Thyroid gland (tissue), 4 donors: ENCODE measurements at regions of chr2 and their contacts with region 1.

Region 1: GRCh38 chr2:15636972-15637785 is 45.5 kb downstream of the DDX1 start:
- DNase-seq: peak; percentile 82 to 84
- H3K4me3 ChIP-seq: no peak overlapping the region
- H3K27ac ChIP-seq: peak overlapping the region; percentile 42 to 65 (median 43)
- H3K4me1 ChIP-seq: peaks cover 18 to 38% of the 10 kb centered on the region in 2 donors
- H3K27me3 ChIP-seq: no peaks in the 10 kb centered on the region
- CTCF ChIP-seq: peak; percentile 64 to 100 (median 94)
- POLR2A ChIP-seq: no peak

Region 2: DNA sequence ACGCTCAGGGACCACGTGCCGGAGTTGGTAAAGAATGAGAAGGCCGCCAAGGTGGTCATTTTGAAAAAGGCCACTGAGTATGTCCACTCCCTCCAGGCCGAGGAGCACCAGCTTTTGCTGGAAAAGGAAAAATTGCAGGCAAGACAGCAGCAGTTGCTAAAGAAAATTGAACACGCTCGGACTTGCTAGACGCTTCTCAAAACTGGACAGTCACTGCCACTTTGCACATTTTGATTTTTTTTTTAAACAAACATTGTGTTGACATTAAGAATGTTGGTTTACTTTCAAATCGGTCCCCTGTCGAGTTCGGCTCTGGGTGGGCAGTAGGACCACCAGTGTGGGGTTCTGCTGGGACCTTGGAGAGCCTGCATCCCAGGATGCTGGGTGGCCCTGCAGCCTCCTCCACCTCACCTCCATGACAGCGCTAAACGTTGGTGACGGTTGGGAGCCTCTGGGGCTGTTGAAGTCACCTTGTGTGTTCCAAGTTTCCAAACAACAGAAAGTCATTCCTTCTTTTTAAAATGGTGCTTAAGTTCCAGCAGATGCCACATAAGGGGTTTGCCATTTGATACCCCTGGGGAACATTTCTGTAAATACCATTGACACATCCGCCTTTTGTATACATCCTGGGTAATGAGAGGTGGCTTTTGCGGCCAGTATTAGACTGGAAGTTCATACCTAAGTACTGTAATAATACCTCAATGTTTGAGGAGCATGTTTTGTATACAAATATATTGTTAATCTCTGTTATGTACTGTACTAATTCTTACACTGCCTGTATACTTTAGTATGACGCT is 308.9 kb after region 1 on chr2:
- intact Hi-C with region 1: no loop called
- DNase-seq: no peak
- H3K4me3 ChIP-seq: no peak overlapping the region
- H3K27ac ChIP-seq: no peak overlapping the region
- H3K4me1 ChIP-seq: peaks cover 12 to 22% of the 10 kb centered on the region in 2 donors
- H3K27me3 ChIP-seq: no peaks in the 10 kb centered on the region
- CTCF ChIP-seq: no peak
- POLR2A ChIP-seq: no peak

Region 3: DNA sequence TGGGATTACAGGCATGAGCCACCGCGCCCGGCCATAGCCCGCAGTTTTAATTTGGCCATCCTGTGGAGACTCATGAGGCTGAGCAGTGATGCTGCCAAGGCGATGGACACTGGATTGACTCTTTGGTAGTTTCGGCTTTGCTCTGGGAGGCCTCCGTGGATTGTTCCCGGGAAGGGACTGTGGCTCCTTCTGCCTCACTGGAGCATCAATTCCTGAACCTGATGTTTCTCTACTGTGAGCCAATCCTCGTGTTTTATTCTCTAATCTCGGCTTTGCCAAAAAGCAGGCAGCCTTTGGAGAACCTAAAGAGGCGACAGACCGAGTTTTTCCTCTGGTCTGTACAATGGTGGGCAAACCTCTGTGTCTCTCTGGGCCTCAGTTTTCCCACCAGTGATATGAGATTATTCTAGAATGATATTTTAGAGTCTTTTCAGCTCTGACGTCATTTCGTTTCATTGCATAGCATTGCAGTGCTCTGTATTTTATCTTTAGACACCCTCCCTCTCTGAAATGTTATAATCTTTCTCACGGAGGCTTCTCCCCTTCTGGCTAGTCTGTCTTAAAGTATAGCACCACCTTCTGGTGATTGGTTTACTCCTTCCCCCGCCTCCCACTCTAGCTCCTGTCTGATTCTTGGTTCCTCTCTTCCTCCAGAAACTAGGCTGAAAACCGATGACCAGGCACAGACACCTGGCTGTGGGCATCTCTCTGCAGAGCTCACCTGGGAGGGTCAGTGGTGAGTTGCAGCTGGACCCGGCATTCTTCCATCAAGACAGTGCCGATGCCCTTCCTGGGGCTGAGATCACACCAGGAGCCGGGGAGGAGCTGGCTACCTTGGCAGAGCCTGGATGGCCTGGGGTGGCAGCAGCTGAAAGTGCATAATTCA is 644.5 kb after region 1 on chr2:
- intact Hi-C with region 1: loop called (anchors 5 kb)
- DNase-seq: peak; percentile 48 to 50
- H3K4me3 ChIP-seq: no peak overlapping the region
- H3K27ac ChIP-seq: no peak overlapping the region
- H3K4me1 ChIP-seq: no peaks in the 10 kb centered on the region
- H3K27me3 ChIP-seq: no peaks in the 10 kb centered on the region
- CTCF ChIP-seq: peak in 5 of 6 experiments; percentile 31 to 63 (median 61)
- POLR2A ChIP-seq: no peak

Region 4: DNA sequence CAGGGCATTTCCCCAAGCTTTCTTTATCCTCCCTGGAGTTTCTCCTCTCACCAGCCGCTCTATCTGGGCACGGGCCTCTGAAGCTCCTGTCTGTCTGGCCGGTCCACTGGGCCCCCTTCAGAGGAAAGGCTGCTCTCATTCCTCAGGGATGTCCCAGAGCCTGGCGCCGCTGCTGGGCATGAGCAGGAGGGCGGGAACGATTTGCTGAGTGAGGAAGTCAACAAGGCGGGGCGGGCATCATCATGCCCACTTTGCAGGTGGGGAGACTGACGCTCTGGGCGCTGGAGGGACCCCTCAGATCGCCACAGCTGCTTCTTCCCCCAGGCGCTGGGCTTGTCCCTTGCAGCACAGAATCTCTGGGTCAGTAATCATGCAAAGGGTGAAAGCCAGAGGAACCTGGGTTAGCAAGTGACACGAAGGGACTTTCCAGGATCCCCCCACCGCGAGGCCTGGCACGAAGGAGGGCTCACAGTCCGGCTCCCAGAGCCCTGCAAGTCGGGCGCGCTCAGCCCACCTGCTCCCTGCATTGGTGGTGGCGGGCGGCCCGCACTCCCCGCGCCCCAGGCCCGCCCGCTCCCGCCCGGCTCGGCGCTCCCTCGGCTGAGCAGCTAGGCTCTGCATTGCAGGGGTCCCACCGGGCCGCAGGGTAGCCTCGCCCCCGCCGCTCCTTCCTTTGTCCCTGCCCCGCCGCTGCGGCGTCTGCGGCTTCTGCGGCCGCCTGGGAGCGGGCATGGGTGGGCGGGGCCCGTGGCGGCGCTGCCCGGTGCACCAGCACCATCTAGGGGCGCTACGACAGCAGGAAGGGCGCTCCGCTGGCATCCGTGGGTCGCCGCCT is 870.7 kb after region 1 on chr2:
- intact Hi-C with region 1: loop called (anchors 5 kb)
- DNase-seq: peak; percentile 54 to 64
- H3K4me3 ChIP-seq: peak overlapping the region in 1 of 3 donors; percentile 23
- H3K27ac ChIP-seq: no peak overlapping the region
- H3K4me1 ChIP-seq: peaks cover 0 to 6% of the 10 kb centered on the region in 2 donors
- H3K27me3 ChIP-seq: no peaks in the 10 kb centered on the region
- CTCF ChIP-seq: peak; percentile 26 to 91 (median 56)
- POLR2A ChIP-seq: no peak